ENCODE measurements at regions of chr12 and their contacts with region 1.

Region 1: DNA sequence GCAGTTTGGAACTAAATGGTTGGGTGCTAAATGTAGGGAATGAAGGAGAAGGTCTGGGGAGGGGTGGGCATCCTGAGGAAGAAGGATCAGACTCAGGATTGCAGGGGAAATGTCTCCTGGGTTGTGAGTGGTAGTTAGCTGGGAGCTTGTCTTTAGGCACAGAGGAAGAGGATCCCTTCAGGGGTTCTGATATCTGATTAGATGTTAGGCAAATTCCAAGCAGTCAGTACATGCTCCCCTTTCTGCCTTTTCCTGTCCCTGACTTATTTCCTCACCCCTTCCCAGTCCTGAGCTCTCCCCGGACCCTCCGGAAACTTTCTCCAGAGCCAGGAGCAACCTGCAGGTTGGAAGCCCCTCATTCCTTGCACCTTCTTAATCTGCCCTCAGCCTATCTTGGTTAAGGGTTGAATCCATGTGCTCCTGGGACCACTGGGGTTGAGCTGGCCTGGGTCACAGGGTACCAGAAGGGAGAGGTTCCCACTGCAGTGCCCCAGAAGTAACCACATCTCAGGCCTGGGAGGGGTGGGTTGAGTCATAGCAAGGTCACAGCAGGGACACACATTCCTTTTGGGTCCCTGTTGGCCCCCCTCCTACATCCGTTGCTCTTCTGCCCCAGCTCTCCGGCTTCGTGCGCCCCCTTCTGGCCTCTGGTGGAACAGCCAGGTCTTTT is 1.6 kb downstream of the IGFBP6 start:
- DNase-seq: peak; percentile 97
- ATAC-seq: peak; percentile 52
- H3K4me3 Mint-ChIP-seq: peak overlapping the region; percentile 69
- H3K27ac Mint-ChIP-seq: peak overlapping the region; percentile 86
- H3K4me1 Mint-ChIP-seq: peaks cover 51% of the 10 kb centered on the region
- H3K27me3 Mint-ChIP-seq: peaks cover 2% of the 10 kb centered on the region
- CTCF ChIP-seq: peak; percentile 93

Region 2: DNA sequence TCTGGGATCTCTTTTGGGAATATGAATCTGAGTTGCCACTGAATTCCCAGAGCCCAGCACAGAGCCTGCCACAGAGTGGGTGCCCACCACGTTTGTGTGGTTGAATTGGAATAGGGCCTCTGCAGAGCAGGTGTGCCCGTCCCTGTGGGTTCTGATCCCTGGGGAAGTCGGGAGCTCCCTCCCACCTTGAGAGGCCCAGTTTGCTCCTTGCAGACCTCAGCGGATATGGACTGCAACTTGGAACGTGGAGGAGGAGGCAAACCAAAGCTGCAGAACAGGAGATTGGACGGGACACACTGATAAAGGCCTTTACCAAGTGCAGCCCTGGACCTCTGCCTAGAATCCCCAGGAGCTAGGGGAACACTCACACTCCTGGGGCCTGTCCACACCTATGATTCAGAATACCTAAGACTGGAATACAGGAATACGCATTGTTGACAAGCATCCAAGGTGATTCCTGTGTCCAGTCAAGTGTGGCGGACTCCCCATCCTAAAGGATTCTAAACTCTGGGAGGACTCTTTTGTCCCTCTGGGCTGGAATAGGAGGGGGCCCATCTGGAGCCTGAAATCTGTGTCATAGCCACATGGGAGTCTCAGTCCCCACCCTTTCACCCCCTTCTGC is 324.4 kb before region 1 on chr12:
- CTCF ChIA-PET with region 1: no interaction called
- POLR2A ChIA-PET with region 1: no interaction called
- intact Hi-C with region 1: no loop called
- DNase-seq: no peak
- ATAC-seq: no peak
- H3K4me3 Mint-ChIP-seq: no peak overlapping the region
- H3K27ac Mint-ChIP-seq: no peak overlapping the region
- H3K4me1 Mint-ChIP-seq: no peaks in the 10 kb centered on the region
- H3K27me3 Mint-ChIP-seq: peaks cover 3% of the 10 kb centered on the region
- CTCF ChIP-seq: no peak

Region 3: GRCh38 chr12:53047221-53048042 is 51.7 kb before region 1 on chr12:
- CTCF ChIA-PET with region 1: interaction called, 19 read pairs
- POLR2A ChIA-PET with region 1: interaction called, 5 read pairs
- intact Hi-C with region 1: no loop called
- DNase-seq: peak; percentile 64
- ATAC-seq: peak; percentile 80
- H3K4me3 Mint-ChIP-seq: peak overlapping the region; percentile 85
- H3K27ac Mint-ChIP-seq: peak overlapping the region; percentile 27
- H3K4me1 Mint-ChIP-seq: peaks cover 27% of the 10 kb centered on the region
- H3K27me3 Mint-ChIP-seq: no peaks in the 10 kb centered on the region
- CTCF ChIP-seq: peak; percentile 54

Region 4: GRCh38 chr12:53054112-53054833 is 44.8 kb before region 1 on chr12:
- CTCF ChIA-PET with region 1: interaction called, 22 read pairs
- POLR2A ChIA-PET with region 1: interaction called, 9 read pairs
- intact Hi-C with region 1: no loop called
- DNase-seq: peak; percentile 97
- ATAC-seq: peak; percentile 96
- H3K4me3 Mint-ChIP-seq: peak overlapping the region; percentile 91
- H3K27ac Mint-ChIP-seq: peak overlapping the region; percentile 90
- H3K4me1 Mint-ChIP-seq: peaks cover 10% of the 10 kb centered on the region
- H3K27me3 Mint-ChIP-seq: no peaks in the 10 kb centered on the region
- CTCF ChIP-seq: no peak

Region 5: GRCh38 chr12:53079226-53080117 is 19.6 kb before region 1 on chr12 and contains the start of gene SPRYD3:
- CTCF ChIA-PET with region 1: interaction called, 553 read pairs
- POLR2A ChIA-PET with region 1: interaction called, 27 read pairs
- intact Hi-C with region 1: loop called (anchors 1 kb)
- DNase-seq: peak; percentile 98
- ATAC-seq: peak; percentile 98
- H3K4me3 Mint-ChIP-seq: peak within 1 kb of the TSS; percentile 83
- H3K27ac Mint-ChIP-seq: peak within 1 kb of the TSS; percentile 80
- H3K4me1 Mint-ChIP-seq: peaks cover 34% of the 10 kb centered on the region
- H3K27me3 Mint-ChIP-seq: no peaks in the 10 kb centered on the region
- CTCF ChIP-seq: no peak
- total RNA-seq, gene SPRYD3: 24.8 to 25.0 TPM

Region 6: GRCh38 chr12:53145383-53146260 is 46.5 kb after region 1 on chr12:
- CTCF ChIA-PET with region 1: no interaction called
- POLR2A ChIA-PET with region 1: no interaction called
- intact Hi-C with region 1: no loop called
- DNase-seq: no peak
- ATAC-seq: no peak
- H3K4me3 Mint-ChIP-seq: no peak overlapping the region
- H3K27ac Mint-ChIP-seq: no peak overlapping the region
- H3K4me1 Mint-ChIP-seq: no peaks in the 10 kb centered on the region
- H3K27me3 Mint-ChIP-seq: no peaks in the 10 kb centered on the region
- CTCF ChIP-seq: no peak

Region 7: DNA sequence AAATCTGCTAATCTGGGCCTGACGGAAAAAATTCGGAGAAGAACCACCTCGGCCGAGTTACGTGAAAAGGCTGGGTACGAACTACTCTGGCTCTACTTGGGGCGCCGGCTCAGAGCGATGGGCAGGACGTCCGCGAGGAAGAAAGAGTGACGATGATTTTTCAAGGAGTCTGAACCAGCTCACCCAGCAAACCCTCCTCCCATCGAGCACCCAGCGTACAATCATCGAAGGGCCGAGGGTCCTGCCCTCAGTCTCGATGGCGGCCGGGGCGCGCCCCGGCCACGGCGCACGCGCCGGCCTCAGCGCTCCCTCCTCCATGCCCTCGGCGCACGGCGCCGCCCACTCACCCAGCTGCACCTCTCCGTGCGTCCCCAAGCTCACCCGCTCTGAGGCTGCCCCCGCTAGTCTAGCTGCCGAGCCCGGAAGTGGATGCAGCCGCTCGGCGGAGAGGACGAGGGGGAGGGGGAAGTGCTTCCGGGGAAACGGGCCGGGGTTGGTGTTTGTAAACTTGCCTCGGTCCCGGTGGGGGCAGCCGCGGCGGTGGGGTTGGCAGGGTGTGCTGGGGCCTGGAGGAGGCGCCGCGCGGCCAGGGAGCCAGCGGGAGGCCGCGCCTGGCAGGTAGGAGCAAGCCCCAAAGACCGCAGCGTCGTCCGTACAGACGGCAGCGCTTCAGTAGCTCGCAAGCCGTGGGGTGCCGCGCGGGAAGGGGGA is 81.3 kb after region 1 on chr12 and contains the starts of genes CSAD and ZNF740:
- CTCF ChIA-PET with region 1: interaction called, 11 read pairs
- POLR2A ChIA-PET with region 1: interaction called, 7 read pairs
- intact Hi-C with region 1: no loop called
- DNase-seq: peak; percentile 99
- ATAC-seq: peak; percentile 95
- H3K4me3 Mint-ChIP-seq: peak within 1 kb of the TSS; percentile 89
- H3K27ac Mint-ChIP-seq: peak within 1 kb of the TSS; percentile 96
- H3K4me1 Mint-ChIP-seq: peaks cover 51% of the 10 kb centered on the region
- H3K27me3 Mint-ChIP-seq: no peaks in the 10 kb centered on the region
- CTCF ChIP-seq: no peak
- total RNA-seq, gene CSAD: 13.8 to 18.6 TPM
- total RNA-seq, gene ZNF740: 31.3 to 35.9 TPM

Region 8: DNA sequence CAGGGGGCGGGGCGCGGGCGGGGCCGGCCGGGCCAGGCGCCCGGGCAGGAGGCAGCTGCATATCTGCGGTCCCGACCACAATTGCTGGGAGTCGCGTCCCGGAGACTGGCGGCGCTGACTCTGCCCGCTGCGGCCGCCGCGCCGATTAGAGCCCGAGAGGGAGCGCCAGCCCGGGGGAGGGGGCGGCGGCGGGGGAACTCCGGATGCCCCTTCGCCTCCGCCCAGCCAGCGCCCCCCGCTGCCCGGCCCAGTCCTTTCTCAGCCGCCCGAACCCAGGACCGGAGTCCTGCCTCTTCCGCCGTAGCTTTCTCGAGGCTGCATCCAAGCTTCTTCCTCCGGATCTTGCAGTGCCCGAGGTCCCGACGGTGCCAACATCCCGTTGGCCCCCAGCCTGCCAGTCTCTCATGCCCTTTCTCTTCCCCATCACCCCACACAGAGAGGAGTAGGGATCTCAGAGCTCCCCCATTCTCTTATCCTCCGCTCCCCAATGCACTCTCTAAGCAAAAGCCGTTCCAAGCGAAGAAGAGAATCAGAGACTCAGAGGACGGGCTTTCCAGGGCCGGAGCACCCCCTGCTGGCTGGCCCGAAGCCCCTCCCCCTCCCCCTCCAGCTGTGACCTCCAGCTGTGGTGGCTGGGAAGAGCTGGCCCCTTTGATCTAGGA is 245.8 kb after region 1 on chr12:
- CTCF ChIA-PET with region 1: interaction called, 11 read pairs
- POLR2A ChIA-PET with region 1: interaction called, 3 read pairs
- intact Hi-C with region 1: no loop called
- DNase-seq: peak; percentile 85
- ATAC-seq: peak; percentile 86
- H3K4me3 Mint-ChIP-seq: peak overlapping the region; percentile 82
- H3K27ac Mint-ChIP-seq: peak overlapping the region; percentile 71
- H3K4me1 Mint-ChIP-seq: peaks cover 19% of the 10 kb centered on the region
- H3K27me3 Mint-ChIP-seq: peaks cover 3% of the 10 kb centered on the region
- CTCF ChIP-seq: peak; percentile 75

Measured in activated CD8-positive, alpha-beta T cell treated with anti-CD3 and anti-CD28 coated beads for 36 hours (primary cell).